Left cardiac atrium (tissue), 4 donors: ENCODE measurements at regions of chr3 and their contacts with region 1.

Region 1: GRCh38 chr3:38117748-38118420 is 19.0 kb downstream of the ACAA1 start:
- DNase-seq: peak; percentile 66
- ATAC-seq: peak; percentile 62 to 71

Region 2: DNA sequence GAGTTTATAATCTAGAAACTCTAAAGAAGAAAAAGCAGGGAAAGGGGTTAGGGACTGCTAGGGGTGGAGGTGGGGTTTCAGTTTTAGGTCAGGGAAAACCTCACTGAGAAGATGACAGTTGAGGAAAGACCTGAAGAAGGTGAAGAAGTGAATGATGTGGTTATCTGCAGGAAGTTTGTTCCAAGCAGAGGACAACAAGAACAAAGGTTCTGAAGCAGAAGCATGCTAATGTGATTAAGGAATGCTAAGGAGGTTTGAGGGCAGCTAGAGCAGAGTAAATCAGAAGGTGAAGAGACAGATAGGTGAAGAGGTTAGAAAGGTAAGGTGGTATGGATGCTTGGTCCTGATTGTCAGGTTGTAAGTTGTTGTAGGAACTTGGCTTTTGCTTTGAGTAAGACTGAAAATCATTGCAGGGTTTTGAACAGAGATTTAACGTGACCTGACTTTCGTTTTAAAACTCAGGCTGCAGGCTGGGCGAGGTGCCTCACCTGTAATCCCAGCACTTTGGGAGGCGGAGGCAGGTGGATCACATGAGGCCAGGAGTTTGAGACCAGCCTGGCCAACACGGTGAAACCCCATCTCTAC is 56.0 kb after region 1 on chr3:
- intact Hi-C with region 1: no loop called
- DNase-seq: no peak
- ATAC-seq: no peak

Region 3: GRCh38 chr3:38346587-38347410 is 228.9 kb after region 1 on chr3 and contains the start of gene XYLB:
- intact Hi-C with region 1: loop called in 1 of 2 experiments (anchors 5 kb)
- DNase-seq: peak; percentile 92
- ATAC-seq: peak; percentile 99
- total RNA-seq, gene XYLB: 1.6 TPM

Region 4: DNA sequence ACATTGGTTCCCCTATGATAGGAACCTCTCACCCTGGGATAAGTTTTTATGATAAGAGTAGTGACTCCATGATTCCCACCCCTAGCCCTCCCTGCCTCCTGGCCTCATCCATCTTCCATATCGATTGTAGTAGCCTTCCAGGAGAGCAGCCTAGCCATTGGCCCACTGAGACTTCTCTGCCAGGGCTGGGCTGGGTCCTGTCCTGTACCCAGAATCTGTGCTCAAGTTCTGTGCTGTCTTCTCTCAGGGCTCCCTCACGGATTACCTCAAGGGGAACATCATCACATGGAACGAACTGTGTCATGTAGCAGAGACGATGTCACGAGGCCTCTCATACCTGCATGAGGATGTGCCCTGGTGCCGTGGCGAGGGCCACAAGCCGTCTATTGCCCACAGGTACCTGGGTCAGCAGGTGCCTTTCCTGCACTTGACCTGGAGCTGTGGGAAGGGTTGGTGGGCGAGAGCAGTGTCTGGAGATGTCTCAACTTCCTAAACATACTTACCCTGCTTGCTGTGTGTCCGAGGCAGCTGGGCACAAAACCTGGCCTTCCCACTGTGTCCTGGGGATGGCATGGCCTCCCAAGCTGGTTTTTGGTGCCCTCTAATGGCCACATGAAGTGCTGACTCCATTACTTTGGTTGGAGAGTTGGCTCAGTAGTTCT is 361.7 kb after region 1 on chr3:
- intact Hi-C with region 1: loop called (anchors 10 kb)
- DNase-seq: peak; percentile 65
- ATAC-seq: peak; percentile 86 to 88